ENCODE measurements at regions of chr7 and their contacts with region 1.

Region 1: GRCh38 chr7:4692055-4692454 is 10.0 kb downstream of the FOXK1 start:
- DNase-seq: no peak
- H3K4me3 ChIP-seq: no peak overlapping the region
- H3K27ac ChIP-seq: peak overlapping the region; percentile 44 to 75
- H3K4me1 ChIP-seq: peaks cover 8% of the 10 kb centered on the region
- H3K27me3 ChIP-seq: no peaks in the 10 kb centered on the region
- CTCF ChIP-seq: no peak
- POLR2A ChIP-seq: no peak

Region 2: GRCh38 chr7:4226525-4226884 is 465.6 kb before region 1 on chr7:
- intact Hi-C with region 1: no loop called
- DNase-seq: no peak
- H3K4me3 ChIP-seq: no peak overlapping the region
- H3K27ac ChIP-seq: no peak overlapping the region
- H3K4me1 ChIP-seq: no peaks in the 10 kb centered on the region
- H3K27me3 ChIP-seq: no peaks in the 10 kb centered on the region
- CTCF ChIP-seq: no peak
- POLR2A ChIP-seq: no peak

Region 3: DNA sequence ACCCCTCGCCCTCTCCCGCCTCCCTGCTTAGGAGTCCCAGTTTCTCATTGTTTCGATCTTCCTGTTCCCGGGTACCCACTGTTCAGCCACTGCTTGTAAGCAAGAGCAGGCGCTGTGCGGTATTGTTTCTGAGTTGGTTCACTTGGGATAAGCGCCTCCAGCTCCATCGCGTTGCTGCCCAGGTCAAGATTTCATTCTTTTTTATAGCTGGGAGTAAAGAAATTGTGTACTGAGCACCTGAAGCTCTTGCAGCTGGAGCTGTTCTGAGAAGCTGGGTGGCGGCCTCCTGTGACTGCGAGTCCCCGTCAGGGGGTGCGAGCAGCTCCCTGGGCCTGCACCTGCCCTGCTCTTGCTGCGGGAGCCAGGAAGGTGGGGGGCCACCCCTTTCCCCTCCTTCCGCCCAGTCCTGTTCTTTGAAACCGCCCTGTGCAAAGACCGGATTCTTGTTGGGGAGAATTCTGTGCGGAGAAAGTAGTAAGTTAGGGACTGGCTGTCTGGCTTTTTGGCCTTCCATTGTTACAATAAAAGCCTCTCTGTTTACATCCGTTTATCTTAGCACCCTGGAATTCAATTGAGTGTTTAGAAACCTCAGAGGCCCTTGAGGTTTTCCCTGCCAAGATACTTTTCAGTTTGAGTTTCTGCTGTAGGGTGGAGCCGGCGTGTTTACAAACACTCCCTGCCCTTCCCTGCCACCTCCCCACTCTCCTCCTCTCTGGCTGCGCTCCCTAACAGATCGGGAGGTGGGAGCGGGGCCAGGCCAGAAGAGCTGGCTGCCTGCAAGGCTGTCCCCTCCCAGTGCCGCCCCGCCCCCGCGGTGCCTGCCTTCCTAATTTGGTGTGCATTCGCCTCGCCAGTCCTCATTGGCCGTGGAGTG is 52.6 kb after region 1 on chr7:
- intact Hi-C with region 1: loop called (anchors 2 kb)
- DNase-seq: peak; percentile 100
- H3K4me3 ChIP-seq: peak overlapping the region; percentile 1 to 26
- H3K27ac ChIP-seq: peak overlapping the region; percentile 88 to 94
- H3K4me1 ChIP-seq: peaks cover 5% of the 10 kb centered on the region
- H3K27me3 ChIP-seq: no peaks in the 10 kb centered on the region
- CTCF ChIP-seq: no peak
- POLR2A ChIP-seq: peak; percentile 47

Measured in prostate gland (tissue), 2 donors.